ENCODE measurements at regions of chr15 and their contacts with region 1.

Region 1: DNA sequence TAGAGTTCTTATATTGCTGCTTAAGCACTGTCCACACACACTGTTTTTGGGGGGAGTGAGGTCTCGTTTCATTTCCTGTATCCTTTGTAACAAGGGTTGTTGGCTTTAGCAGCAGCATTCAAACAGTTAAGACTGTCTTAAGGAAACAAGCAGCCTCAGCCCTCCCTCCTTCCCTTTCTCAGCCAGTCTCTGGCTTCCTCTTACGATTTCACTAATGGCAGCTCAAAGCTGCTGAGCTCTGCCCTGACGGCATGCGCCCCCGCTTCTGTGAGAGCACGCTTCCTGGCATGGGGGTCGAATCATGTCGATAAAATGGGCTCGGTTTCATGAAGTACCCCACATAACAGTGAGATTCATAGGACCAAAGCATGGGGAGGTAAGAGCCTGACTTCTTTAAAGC is 105.0 kb downstream of the KLHL25 start:
- DNase-seq: peak; percentile 72
- ATAC-seq: peak; percentile 84
- H3K4me3 Mint-ChIP-seq: peak overlapping the region; percentile 97
- H3K27ac Mint-ChIP-seq: peak overlapping the region; percentile 99
- H3K4me1 Mint-ChIP-seq: peaks cover 61% of the 10 kb centered on the region
- H3K27me3 Mint-ChIP-seq: no peaks in the 10 kb centered on the region

Region 2: DNA sequence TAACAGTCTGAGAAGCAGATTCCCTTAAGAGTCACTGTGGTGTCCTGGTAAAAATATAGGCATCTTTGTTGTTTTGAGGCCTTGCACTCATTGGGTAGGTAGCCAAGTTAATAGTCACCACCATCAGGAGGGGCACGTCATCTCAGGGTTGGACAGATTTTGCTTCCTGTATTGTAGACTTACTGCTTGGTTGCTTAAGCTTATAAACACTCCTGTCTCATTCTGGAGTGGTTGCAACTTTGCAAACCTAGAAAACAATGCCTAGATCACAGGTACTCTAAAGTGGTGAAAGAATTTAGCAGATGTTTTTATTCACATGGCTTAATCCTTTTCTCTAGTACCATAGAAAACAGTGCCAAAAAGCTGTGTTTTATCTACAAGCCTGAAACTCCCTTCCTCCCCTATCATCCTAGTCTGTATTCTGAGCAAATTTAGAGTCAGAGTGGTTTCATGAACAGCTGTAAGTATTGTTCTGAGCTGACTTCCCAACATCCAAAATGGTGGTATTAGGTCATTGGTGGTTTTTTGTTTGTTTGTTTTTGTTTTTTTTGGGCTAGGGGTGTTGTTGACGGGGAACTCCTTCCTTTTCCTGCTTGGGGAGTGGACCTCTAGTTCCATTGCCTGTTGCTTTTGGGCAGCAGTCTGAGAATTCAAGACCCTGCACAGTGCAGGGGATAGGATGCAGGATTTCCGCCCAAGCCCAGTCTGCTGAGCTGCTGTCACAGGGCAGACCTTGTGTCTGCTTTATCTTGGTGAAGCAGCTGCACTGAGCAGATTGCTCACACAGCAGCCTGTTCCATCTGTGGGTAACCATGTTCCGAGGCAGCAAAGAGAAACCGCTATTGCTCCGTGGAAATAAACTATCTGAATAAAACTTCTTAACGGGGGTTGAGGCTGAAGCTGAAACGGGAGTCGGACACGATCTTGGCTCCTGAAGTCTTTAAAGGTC is 107.3 kb before region 1 on chr15:
- POLR2A ChIA-PET with region 1: interaction called, 44 read pairs
- DNase-seq: peak; percentile 66
- ATAC-seq: peak; percentile 89
- H3K4me3 Mint-ChIP-seq: peak overlapping the region; percentile 80
- H3K27ac Mint-ChIP-seq: peak overlapping the region; percentile 98
- H3K4me1 Mint-ChIP-seq: peaks cover 54% of the 10 kb centered on the region
- H3K27me3 Mint-ChIP-seq: no peaks in the 10 kb centered on the region

Region 3: GRCh38 chr15:85618956-85619491 is 70.7 kb before region 1 on chr15:
- POLR2A ChIA-PET with region 1: interaction called, 14 read pairs
- DNase-seq: peak; percentile 34
- ATAC-seq: peak; percentile 85
- H3K4me3 Mint-ChIP-seq: no peak overlapping the region
- H3K27ac Mint-ChIP-seq: no peak overlapping the region
- H3K4me1 Mint-ChIP-seq: peaks cover 24% of the 10 kb centered on the region
- H3K27me3 Mint-ChIP-seq: no peaks in the 10 kb centered on the region

Region 4: DNA sequence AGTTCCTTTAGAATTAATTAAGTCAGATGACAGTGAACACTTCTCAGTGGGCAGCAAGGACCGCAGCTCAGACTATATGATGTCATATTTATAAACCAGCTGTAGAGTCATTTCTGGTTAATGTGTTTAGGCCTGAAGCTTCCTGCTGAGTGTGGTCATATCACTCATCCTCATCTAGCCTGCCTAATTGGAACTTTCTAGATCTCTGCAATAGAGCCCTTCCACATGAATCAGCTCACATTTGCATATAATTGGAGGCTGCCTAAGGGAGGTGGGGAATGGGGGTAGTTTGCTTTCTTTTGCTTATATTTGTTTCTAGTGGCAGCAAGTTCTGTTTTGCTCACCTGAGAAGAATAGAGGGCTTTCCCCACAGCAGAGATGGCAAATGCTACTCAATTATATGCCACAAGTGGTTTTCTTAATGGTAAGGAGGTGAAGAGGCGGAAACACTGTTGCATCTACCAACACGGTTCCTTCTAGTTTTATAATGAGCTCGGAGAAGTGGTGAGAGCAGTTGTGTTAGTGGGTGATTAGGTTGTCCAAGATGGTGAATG is 43.1 kb before region 1 on chr15:
- POLR2A ChIA-PET with region 1: interaction called, 25 read pairs
- DNase-seq: no peak
- ATAC-seq: peak; percentile 80
- H3K4me3 Mint-ChIP-seq: peak overlapping the region; percentile 35
- H3K27ac Mint-ChIP-seq: peak overlapping the region; percentile 57
- H3K4me1 Mint-ChIP-seq: peaks cover 31% of the 10 kb centered on the region
- H3K27me3 Mint-ChIP-seq: no peaks in the 10 kb centered on the region

Region 5: GRCh38 chr15:85667491-85668424 is 22.0 kb before region 1 on chr15:
- POLR2A ChIA-PET with region 1: interaction called, 34 read pairs
- DNase-seq: no peak
- ATAC-seq: peak; percentile 95
- H3K4me3 Mint-ChIP-seq: peak overlapping the region; percentile 61
- H3K27ac Mint-ChIP-seq: peak overlapping the region; percentile 83
- H3K4me1 Mint-ChIP-seq: peaks cover 15% of the 10 kb centered on the region
- H3K27me3 Mint-ChIP-seq: no peaks in the 10 kb centered on the region

Region 6: DNA sequence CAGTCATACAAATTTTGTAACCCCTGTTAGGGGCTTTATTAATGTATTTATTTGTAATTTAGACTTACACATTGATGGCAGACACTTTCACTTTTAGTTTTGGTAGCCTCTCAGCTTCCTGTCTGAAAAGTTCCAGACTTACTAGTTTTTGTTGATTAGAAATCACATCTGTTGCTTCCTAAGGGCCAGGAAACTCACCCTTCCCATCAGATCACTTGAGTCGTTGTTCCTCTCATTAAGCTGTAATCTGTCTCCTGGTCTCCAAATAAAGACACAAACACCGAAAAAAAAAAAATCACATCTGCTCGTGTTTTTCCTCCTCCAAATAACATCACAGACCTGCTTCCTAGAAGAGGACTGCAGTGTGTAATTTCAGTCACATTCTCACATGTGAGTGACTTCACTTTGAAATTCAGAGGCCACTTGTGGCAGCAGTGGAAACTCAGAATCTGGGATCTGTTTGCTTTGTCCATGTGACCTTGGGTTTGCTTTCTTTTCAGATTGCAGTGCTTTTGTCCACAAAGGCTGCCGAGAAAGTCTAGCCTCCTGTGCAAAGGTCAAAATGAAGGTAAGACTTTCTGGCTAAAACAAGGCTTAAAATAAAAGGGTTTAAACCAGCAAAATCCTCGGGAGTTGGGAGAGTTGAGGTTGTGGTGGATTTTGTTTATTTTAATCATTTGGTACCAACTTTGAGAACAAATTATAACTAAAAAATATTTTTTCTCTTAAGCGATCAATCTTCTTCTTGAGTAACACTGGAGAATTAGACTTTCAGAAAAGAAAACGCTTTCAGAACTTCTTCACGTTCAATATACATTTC is 18.0 kb after region 1 on chr15:
- POLR2A ChIA-PET with region 1: interaction called, 101 read pairs
- DNase-seq: no peak
- ATAC-seq: peak; percentile 13
- H3K4me3 Mint-ChIP-seq: peak overlapping the region; percentile 87
- H3K27ac Mint-ChIP-seq: peak overlapping the region; percentile 94
- H3K4me1 Mint-ChIP-seq: peaks cover 55% of the 10 kb centered on the region
- H3K27me3 Mint-ChIP-seq: no peaks in the 10 kb centered on the region

Region 7: DNA sequence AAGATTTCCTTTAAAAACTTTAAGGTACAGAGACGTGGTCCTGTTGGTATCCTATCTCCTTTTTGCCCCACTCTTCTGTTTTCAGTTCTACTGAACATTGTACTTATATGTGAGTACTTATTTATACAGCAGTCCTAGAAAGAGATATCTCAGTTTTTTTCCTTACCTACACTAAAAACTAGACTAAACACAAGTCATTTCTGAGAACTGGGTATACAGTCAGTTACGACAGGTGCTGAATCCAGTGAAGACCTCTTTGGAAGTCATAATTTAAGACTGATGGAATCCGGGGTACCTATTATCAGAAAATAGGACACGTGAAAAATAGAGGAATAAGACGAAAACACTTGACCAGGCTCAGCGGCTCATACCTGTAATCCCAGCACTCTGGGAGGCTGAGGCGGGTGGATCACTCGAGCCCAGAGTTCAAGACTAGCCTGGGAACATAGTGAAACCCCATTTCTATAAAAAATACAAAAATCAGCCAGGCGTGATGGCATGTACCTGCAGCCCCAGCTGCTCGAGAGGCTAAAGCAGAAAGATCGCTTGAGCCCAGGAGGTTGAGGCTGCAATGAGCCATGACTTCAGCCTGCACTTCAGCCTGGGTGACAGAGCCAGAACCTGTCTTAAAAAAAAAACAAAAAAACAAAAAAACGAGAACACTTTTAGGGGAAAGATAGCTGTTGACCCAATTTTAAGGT is 28.7 kb after region 1 on chr15:
- POLR2A ChIA-PET with region 1: no interaction called
- DNase-seq: no peak
- ATAC-seq: no peak
- H3K4me3 Mint-ChIP-seq: no peak overlapping the region
- H3K27ac Mint-ChIP-seq: no peak overlapping the region
- H3K4me1 Mint-ChIP-seq: peaks cover 6% of the 10 kb centered on the region
- H3K27me3 Mint-ChIP-seq: no peaks in the 10 kb centered on the region

Region 8: GRCh38 chr15:85742186-85742821 is 52.6 kb after region 1 on chr15:
- POLR2A ChIA-PET with region 1: no interaction called
- DNase-seq: no peak
- ATAC-seq: no peak
- H3K4me3 Mint-ChIP-seq: no peak overlapping the region
- H3K27ac Mint-ChIP-seq: peak overlapping the region; percentile 28
- H3K4me1 Mint-ChIP-seq: no peaks in the 10 kb centered on the region
- H3K27me3 Mint-ChIP-seq: no peaks in the 10 kb centered on the region